Psoas muscle (tissue), 8 donors: ENCODE measurements at regions of chr17 and their contacts with region 1.

Region 1: DNA sequence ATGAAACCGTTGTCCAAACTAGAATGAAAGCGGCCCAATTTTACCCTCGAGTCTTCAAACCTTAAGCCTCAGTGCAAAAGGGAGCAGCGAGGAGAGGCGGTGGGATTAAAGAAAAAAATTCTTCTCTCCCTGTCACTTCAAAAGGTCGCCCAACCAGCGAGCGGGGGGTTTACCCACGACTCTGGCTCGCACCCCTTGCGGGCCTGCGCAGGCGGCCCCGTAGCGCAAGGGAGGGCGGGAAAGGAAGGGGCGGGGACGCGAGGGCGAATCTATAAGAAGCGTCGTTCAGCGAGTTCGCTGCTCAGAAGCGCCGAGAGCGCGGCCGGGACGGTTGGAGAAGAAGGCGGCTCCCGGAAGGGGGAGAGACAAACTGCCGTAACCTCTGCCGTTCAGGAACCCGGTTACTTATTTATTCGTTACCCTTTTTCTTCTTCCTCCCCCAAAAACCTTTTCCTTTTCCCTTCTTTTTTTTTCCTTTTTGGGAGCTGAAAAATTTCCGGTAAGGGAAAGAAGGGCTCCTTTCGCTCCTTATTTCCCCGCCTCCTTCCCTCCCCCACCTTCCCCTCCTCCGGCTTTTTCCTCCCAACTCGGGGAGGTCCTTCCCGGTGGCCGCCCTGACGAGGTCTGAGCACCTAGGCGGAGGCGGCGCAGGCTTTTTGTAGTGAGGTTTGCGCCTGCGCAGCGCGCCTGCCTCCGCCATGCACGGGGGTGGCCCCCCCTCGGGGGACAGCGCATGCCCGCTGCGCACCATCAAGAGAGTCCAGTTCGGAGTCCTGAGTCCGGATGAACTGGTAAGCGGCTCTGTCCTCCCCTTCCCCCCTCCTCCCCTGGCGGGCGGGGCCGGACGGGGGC is at the start of gene POLR2A:
- DNase-seq: peak; percentile 99
- ATAC-seq: peak; percentile 81 to 84 (median 82)
- H3K4me3 ChIP-seq: peak within 1 kb of the TSS; percentile 85
- H3K27ac ChIP-seq: peak within 1 kb of the TSS; percentile 100
- H3K4me1 ChIP-seq: peaks cover 55% of the 10 kb centered on the region
- H3K27me3 ChIP-seq: no peaks in the 10 kb centered on the region
- CTCF ChIP-seq: no peak
- total RNA-seq, gene POLR2A: 42.7 to 74.3 (median 56.9) TPM

Region 2: GRCh38 chr17:7351665-7352501 is 132.4 kb before region 1 on chr17 and contains the start of gene KCTD11:
- intact Hi-C with region 1: loop called (anchors 5 kb)
- DNase-seq: peak; percentile 94 to 95
- ATAC-seq: peak; percentile 75 to 80 (median 78)
- H3K4me3 ChIP-seq: peak within 1 kb of the TSS; percentile 98
- H3K27ac ChIP-seq: peak within 1 kb of the TSS; percentile 100
- H3K4me1 ChIP-seq: peaks cover 51% of the 10 kb centered on the region
- H3K27me3 ChIP-seq: no peaks in the 10 kb centered on the region
- CTCF ChIP-seq: no peak
- total RNA-seq, gene KCTD11: 4.5 to 5.2 (median 5.1) TPM

Region 3: DNA sequence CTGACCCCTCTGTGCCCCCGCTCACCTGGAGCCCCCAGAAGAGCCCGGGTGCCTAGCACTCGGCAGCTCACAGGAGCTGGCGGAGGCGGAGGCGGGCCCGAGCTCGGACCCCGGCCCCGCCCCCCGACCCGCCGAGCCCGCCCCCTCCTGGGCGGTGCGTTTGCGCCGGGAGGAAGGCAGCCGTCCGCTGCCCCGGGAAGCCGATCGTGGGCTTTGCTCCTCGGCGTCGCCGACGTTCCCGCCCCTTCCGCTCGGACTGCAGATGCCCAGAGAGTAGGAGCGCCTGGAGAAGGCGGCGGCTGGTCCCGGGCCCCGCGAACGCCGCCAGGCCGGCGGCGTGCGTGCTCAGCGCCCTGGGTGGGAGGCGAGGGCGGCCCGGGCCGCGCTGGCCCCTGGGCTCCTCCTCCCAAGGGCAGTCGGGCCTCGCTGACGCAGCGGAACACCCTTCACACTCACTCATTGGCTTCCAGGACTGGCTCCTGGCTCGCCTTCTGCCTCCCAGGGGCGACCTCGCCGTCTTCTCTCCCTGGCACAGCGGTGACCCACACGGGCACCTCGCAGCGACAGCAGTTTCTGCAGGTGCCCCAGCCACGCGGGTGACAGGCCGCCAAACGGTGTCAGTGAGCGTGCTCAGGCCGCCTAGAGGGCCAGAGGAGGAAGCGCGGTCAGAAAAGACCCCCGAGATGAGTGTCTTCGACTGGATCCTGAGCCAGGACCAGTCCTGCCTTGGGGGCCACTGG is 89.7 kb before region 1 on chr17 and contains the start of gene PLSCR3:
- intact Hi-C with region 1: loop called in 1 of 2 experiments (anchors 5 kb)
- DNase-seq: peak; percentile 89 to 92
- ATAC-seq: peak; percentile 89 to 91 (median 90)
- H3K4me3 ChIP-seq: peak within 1 kb of the TSS; percentile 95
- H3K27ac ChIP-seq: peak within 1 kb of the TSS; percentile 91
- H3K4me1 ChIP-seq: no peaks in the 10 kb centered on the region
- H3K27me3 ChIP-seq: no peaks in the 10 kb centered on the region
- CTCF ChIP-seq: no peak
- total RNA-seq, gene PLSCR3: 13.9 to 16.2 (median 15.1) TPM

Region 4: DNA sequence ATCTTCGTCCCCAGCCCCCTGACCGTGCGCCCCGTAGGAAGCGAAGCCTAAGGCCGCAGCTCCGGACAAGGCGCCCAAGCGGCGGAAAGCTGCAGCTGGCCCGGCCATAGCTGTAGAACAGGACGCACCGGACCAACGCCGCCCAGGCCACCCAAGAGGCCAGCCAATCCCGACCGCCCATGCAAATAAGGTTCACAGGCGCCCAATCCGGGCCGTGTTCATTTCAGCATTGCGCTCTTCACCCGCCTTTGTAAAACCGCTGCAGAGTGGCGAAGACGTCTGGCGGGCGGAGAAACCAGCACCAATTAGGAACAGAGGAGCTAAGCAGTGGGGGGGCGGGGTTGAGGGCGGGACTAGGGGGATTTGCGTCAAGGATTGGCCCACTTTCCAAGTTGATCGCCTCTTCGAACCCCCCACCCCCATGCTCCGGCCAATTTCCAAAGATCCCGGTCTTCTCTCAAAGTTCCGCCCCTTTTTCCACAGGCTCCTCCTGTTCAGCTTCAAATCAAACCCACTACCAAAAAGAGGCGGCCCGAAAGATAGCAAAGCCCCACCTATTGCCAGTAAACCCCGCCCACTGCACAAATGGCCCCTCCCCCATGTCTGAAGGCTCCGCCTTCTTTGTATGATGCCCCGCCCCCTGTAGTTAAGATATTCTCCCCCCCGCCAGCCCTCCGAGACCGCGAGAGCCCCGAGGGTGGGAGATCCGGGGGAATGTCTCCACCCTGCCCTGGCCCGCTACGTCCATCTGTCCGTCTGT is 80.1 kb before region 1 on chr17 and contains the start of gene TMEM256:
- intact Hi-C with region 1: loop called in 1 of 2 experiments (anchors 1 kb)
- DNase-seq: peak; percentile 98 to 99
- ATAC-seq: peak; percentile 91 to 93 (median 92)
- H3K4me3 ChIP-seq: peak within 1 kb of the TSS; percentile 73
- H3K27ac ChIP-seq: peak within 1 kb of the TSS; percentile 75
- H3K4me1 ChIP-seq: peaks cover 9% of the 10 kb centered on the region
- H3K27me3 ChIP-seq: no peaks in the 10 kb centered on the region
- CTCF ChIP-seq: no peak
- total RNA-seq, gene TMEM256: 47.1 to 80.4 (median 53.5) TPM

Region 5: DNA sequence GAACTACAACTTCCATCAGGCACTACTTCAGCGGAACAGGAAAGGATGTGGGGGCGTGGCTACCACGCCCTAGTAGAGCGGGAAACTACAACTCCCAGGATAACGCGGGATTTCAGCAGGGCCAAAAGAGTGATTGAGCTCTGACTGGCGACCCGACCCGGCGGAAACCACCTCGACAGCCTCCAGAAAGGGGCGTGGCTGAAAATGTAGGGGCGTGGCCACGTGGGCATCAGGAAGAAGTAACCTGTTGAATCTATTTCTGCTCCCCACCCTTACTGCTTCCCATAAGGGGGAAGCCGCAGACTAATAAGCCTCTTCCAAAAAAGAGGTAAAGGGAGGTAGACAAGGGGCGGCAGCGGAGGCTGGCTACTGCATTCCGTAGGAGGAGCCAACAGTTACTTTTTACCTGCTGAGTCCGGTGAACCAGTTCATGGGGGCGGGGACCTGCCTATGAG is 49.0 kb before region 1 on chr17 and contains the start of gene TMEM102:
- intact Hi-C with region 1: loop called (anchors 1 to 2 kb)
- DNase-seq: peak; percentile 94 to 97
- ATAC-seq: peak; percentile 79 to 84 (median 82)
- H3K4me3 ChIP-seq: peak within 1 kb of the TSS; percentile 72
- H3K27ac ChIP-seq: peak within 1 kb of the TSS; percentile 100
- H3K4me1 ChIP-seq: peaks cover 33% of the 10 kb centered on the region
- H3K27me3 ChIP-seq: no peaks in the 10 kb centered on the region
- CTCF ChIP-seq: no peak
- total RNA-seq, gene TMEM102: 0.41 to 0.95 (median 0.68) TPM

Region 6: GRCh38 chr17:7444682-7445618 is 39.3 kb before region 1 on chr17 and contains the start of gene CHRNB1:
- intact Hi-C with region 1: loop called (anchors 1 to 2 kb)
- DNase-seq: peak; percentile 93 to 95
- ATAC-seq: peak; percentile 85 to 89 (median 87)
- H3K4me3 ChIP-seq: peak within 1 kb of the TSS; percentile 92
- H3K27ac ChIP-seq: peak within 1 kb of the TSS; percentile 100
- H3K4me1 ChIP-seq: peaks cover 34% of the 10 kb centered on the region
- H3K27me3 ChIP-seq: peaks cover 0 to 7% (median 0%) of the 10 kb centered on the region in 3 donors
- CTCF ChIP-seq: peak; percentile 10
- total RNA-seq, gene CHRNB1: 107 to 190 (median 147) TPM

Region 7: GRCh38 chr17:7844292-7845154 is 360.2 kb after region 1 on chr17:
- intact Hi-C with region 1: loop called in 1 of 2 experiments (anchors 5 kb)
- DNase-seq: peak; percentile 90 to 94
- ATAC-seq: peak; percentile 64 to 70 (median 66)
- H3K4me3 ChIP-seq: peak overlapping the region; percentile 81
- H3K27ac ChIP-seq: peak overlapping the region; percentile 99
- H3K4me1 ChIP-seq: peaks cover 33% of the 10 kb centered on the region
- H3K27me3 ChIP-seq: no peaks in the 10 kb centered on the region
- CTCF ChIP-seq: no peak